CD8-positive, alpha-beta T cell (primary cell): ENCODE measurements at regions of chr10 and their contacts with region 1.

Region 1: DNA sequence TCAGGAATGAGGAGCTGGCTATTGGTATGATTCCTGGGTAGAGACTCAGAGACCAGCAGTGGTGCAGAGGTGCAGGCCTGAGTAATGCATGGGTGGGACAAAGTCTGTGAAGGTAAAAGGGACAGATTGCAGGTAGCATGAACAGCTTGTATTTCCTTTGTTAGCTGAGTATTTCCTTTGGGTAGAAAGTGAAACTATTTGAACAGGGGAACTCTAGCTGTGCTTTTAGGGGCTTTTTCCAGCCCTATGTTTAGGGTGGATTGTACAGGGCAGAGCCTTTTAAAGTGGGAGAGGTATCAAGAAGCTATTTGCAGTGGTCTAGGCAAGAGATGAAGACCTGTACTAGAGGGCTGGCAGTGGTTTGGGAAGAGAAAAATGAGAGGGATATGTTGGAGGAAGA is 739.9 kb downstream of the REEP3 start:
- DNase-seq: no peak
- ATAC-seq: no peak
- H3K4me3 ChIP-seq: no peak overlapping the region
- H3K4me3 Mint-ChIP-seq: no peak overlapping the region
- H3K27ac ChIP-seq: no peak overlapping the region
- H3K27ac Mint-ChIP-seq: no peak overlapping the region
- H3K4me1 ChIP-seq: no peaks in the 10 kb centered on the region
- H3K4me1 Mint-ChIP-seq: no peaks in the 10 kb centered on the region
- H3K27me3 ChIP-seq: no peaks in the 10 kb centered on the region
- H3K27me3 Mint-ChIP-seq: no peaks in the 10 kb centered on the region
- CTCF ChIP-seq: no peak

Region 2: DNA sequence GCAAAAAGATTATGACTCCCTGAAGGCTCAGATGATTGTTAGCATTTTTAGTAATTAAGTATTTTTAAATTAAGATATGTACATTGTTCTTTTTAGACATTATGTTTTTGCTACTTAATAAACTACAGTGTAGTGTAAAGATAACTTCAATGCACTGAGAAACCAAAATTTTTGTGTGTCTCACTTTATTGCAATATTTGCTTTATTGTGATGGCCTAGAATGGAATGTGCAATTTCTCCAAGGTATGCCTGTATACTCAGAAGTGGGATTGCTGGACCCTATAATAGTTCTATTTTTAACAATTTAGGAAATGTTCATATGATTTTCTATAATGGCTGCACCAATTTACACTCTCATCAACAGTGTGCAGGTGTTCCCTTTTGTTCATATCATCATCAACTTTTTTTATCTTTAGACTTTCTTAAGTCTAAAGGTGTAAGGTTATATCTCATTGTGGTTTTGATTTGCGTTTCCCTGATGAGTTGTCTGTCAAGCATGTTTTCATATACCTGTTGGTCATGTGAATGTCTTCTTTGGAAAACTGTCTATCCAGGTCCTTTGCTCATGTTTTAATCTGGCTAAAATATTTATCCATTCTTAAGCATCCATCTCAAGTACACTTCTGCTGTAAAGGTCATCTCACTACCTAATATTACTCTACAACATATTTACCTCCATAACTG is 1341.2 kb after region 1 on chr10:
- CTCF ChIA-PET with region 1: no interaction called
- POLR2A ChIA-PET with region 1: no interaction called
- intact Hi-C with region 1: loop called in 1 of 2 experiments (anchors 10 kb)
- DNase-seq: no peak
- ATAC-seq: no peak
- H3K4me3 ChIP-seq: no peak overlapping the region
- H3K4me3 Mint-ChIP-seq: no peak overlapping the region
- H3K27ac ChIP-seq: no peak overlapping the region
- H3K27ac Mint-ChIP-seq: no peak overlapping the region
- H3K4me1 ChIP-seq: no peaks in the 10 kb centered on the region
- H3K4me1 Mint-ChIP-seq: no peaks in the 10 kb centered on the region
- H3K27me3 ChIP-seq: no peaks in the 10 kb centered on the region
- H3K27me3 Mint-ChIP-seq: no peaks in the 10 kb centered on the region
- CTCF ChIP-seq: no peak